HEK293T (cell line): ENCODE measurements at regions of chr18 and their contacts with region 1.

Region 1: DNA sequence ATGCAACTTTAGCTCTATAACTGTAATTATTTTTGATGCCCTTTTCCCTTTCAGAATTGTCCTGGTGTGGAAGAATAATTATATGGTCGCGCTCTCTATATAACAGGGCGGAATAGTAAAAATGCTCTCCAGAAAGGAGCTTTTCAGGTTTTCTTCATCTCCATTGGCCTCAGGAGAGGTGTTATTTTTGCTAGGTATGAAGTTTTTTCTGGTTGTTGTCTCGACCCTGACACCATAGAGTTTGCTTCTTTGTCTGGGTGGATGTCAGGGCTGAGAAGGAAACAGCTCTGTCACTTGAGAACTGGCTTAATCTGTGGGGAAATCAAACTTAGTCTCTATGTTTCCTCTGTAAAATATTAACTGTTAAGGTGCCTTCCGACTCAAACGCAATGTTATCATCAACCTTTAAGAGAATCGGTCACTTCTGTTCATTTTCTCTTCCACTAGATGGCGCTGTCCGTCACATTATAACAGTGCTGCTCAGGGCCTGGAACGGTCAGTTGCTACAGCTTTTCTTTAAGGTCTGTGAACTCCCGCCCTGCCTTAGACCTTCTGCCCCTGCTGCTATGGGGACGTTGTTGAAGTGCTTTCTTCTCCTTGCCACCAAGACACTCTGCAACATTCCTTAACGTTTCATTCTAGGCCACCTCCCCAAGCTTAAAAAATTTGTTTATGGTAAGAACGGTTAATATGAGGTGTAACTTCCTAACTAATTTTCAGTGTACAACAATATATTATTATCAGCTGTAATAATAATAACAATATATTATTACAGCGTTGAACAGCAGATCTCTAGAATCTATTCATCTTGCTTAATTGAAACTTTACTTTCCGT is 23.8 kb upstream of the SERPINB12 start:
- DNase-seq: peak; percentile 40

Region 2: DNA sequence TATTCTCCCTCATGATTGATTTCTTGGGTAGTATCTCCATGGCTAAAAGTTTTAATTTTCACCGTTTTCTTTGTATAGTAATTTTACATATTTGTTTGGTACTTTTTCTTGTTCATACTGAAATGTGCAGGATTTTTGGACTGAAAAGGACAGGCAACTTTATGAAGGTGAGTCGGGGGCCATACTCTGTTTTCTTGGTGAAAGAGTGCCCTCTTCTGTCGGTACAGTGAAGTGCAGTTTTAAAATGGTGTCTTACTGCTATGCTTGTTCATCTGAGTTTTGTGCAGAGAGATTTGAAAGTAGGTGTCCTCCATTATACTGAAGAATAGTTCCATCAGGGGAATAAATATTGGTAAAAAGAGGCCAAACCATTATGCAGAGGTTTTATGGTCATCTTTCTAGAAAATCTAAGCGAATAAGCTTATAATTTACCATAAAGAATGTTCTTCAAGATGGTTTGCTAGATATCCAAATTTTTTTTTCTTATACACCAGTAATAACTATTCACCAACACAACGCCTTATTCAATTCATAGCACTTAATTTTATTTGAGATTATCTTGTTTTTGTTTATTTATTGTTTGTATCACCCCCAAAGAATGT is 60.1 kb after region 1 on chr18:
- CTCF ChIA-PET with region 1: interaction called, 82 read pairs
- POLR2A ChIA-PET with region 1: interaction called, 3 read pairs
- DNase-seq: peak; percentile 18